PC-9 (cell line): ENCODE measurements at regions of chr1 and their contacts with region 1.

Region 1: DNA sequence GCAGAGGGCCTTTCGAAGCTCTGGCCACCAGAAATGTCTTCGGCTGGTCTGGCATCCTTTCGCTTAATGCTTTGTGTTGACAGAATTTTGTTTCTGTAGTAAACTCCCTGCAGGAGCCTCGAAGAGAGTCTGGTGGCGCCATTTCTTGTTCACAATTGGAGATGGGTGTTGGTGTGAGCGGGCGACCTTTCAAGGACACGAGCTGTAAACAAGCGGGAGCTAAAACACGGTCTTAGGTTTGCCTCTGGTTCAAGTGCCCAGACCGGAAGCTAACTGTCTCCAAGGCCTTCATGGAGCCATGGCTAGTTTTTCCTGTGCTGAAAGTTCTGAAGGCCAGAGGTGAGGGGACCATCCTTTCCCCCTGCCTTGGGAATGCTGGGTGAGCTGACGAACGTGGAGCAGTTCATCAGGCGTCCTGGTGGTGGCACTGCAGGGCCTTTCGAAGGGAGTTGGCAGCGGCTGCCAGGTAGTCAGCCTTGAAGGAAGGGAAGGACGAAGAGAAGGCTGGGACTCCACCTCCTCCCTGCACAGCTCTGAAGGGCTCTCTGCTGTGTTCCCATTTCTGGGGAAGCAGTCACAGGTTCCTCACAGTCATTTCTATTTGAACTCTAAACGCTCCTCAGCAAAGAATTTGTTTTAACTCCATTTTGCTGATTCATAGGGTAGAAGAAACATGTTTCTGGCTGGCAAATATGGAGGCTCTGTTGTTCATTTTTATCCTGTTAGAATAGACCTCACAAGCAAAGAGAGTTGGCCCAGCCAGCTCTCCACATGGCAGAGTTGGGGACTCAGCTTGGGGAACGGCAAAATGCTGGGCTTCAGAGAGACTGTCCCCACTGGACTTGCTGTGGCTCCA is 35.2 kb downstream of the URB2 start:
- DNase-seq: peak in 1 of 2 experiments; percentile 57
- H3K4me3 ChIP-seq: no peak overlapping the region
- H3K27ac ChIP-seq: no peak overlapping the region
- H3K4me1 ChIP-seq: no peaks in the 10 kb centered on the region
- H3K27me3 ChIP-seq: no peaks in the 10 kb centered on the region
- CTCF ChIP-seq: peak; percentile 86

Region 2: GRCh38 chr1:229714964-229715603 is 53.8 kb after region 1 on chr1:
- CTCF ChIA-PET with region 1: no interaction called
- POLR2A ChIA-PET with region 1: no interaction called
- intact Hi-C with region 1: loop called (anchors 2 kb)
- DNase-seq: peak; percentile 51 to 72
- H3K4me3 ChIP-seq: no peak overlapping the region
- H3K27ac ChIP-seq: no peak overlapping the region
- H3K4me1 ChIP-seq: peaks cover 5% of the 10 kb centered on the region; the same call in 1 of the 2 replicates
- H3K27me3 ChIP-seq: no peaks in the 10 kb centered on the region
- CTCF ChIP-seq: peak; percentile 61

Region 3: DNA sequence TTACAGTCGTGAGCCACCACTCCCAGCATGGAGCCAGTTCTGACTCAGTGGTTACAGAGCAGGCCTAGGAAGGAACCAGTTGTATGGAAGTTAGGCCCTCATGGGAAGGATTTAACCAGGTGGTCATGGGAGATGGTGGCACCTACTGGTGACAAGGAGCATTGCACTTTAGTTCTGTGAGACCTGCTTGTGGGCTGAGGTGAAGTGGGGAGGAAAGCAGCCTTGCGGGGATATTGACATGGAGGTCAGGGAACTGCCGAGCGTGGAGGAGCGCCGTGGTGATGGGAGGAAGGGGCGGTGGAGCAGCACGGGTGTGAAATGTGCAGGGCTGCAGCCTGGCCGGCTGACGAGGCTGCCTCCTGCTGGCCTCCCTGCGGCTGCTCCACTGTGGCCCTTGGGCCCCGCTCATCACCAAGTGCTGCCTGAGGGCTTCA is 506.2 kb after region 1 on chr1:
- CTCF ChIA-PET with region 1: no interaction called
- POLR2A ChIA-PET with region 1: no interaction called
- intact Hi-C with region 1: loop called (anchors 10 kb)
- DNase-seq: peak in 1 of 2 experiments; percentile 20
- H3K4me3 ChIP-seq: no peak overlapping the region
- H3K27ac ChIP-seq: no peak overlapping the region
- H3K4me1 ChIP-seq: no peaks in the 10 kb centered on the region
- H3K27me3 ChIP-seq: no peaks in the 10 kb centered on the region
- CTCF ChIP-seq: peak; percentile 88

Region 4: GRCh38 chr1:230268366-230269170 is 607.3 kb after region 1 on chr1:
- CTCF ChIA-PET with region 1: no interaction called
- POLR2A ChIA-PET with region 1: no interaction called
- intact Hi-C with region 1: loop called (anchors 5 kb)
- DNase-seq: peak; percentile 48 to 50
- H3K4me3 ChIP-seq: no peak overlapping the region
- H3K27ac ChIP-seq: no peak overlapping the region
- H3K4me1 ChIP-seq: no peaks in the 10 kb centered on the region
- H3K27me3 ChIP-seq: no peaks in the 10 kb centered on the region
- CTCF ChIP-seq: peak; percentile 75

Region 5: DNA sequence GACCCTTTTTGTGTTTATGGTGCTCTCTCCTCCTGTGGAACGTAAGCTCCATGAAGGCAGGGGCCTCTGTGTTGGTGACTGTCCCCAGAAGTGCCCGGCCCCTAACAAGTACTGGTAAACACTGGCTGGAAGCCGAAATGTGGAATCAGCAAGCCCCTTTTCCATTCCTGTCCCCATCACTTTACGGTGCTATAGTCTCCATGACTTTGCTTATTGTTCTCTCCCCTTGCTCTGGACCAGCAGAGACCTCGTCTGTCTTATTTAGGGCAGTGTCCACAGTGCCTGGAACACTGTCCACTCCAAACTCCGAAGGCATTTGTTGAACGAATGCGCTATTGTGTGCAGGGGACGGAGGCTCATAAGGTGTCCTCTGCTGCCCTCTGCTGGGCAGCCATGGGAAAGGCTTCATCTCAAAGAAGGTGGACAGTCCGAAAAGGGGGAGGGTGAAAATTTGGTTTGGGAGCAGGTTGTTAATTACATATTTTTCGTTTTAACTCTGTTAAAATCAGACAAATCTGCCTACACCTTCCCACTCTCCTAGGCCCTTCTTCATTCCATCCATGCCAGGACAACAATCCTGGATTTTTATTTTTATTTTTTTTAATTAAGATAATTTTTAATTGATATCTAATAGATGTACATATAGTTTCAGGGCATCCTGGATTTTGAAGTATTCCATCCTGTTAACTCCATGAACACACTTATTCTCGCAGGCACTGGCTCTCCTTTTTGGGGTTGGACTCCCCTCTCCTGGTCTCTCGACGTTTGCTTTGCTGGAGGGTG is 649.3 kb after region 1 on chr1:
- CTCF ChIA-PET with region 1: no interaction called
- POLR2A ChIA-PET with region 1: no interaction called
- intact Hi-C with region 1: loop called (anchors 1 kb)
- DNase-seq: peak; percentile 46 to 69
- H3K4me3 ChIP-seq: no peak overlapping the region
- H3K27ac ChIP-seq: no peak overlapping the region
- H3K4me1 ChIP-seq: peaks cover 20% of the 10 kb centered on the region
- H3K27me3 ChIP-seq: peaks cover 14% of the 10 kb centered on the region; the same call in 1 of the 2 replicates
- CTCF ChIP-seq: peak; percentile 94